ENCODE measurements at regions of chr3 and their contacts with region 1.

Region 1: GRCh38 chr3:179082416-179082815 is 10.8 kb upstream of the ZMAT3 start:
- DNase-seq: no peak
- H3K4me3 ChIP-seq: no peak overlapping the region
- H3K27ac ChIP-seq: no peak overlapping the region
- H3K4me1 ChIP-seq: no peaks in the 10 kb centered on the region
- H3K27me3 ChIP-seq: peaks cover 0 to 5% of the 10 kb centered on the region in 2 experiments
- CTCF ChIP-seq: no peak
- POLR2A ChIP-seq: no peak

Region 2: GRCh38 chr3:179098388-179099077 is 16.1 kb after region 1 on chr3:
- CTCF ChIA-PET with region 1: interaction called, 10 read pairs
- POLR2A ChIA-PET with region 1: no interaction called
- dilution Hi-C with region 1: no loop called
- intact Hi-C with region 1: no loop called
- DNase-seq: no peak
- H3K4me3 ChIP-seq: no peak overlapping the region
- H3K27ac ChIP-seq: no peak overlapping the region
- H3K4me1 ChIP-seq: no peaks in the 10 kb centered on the region
- H3K27me3 ChIP-seq: peaks cover 2% of the 10 kb centered on the region in 2 experiments
- CTCF ChIP-seq: no peak
- POLR2A ChIP-seq: no peak

Region 3: DNA sequence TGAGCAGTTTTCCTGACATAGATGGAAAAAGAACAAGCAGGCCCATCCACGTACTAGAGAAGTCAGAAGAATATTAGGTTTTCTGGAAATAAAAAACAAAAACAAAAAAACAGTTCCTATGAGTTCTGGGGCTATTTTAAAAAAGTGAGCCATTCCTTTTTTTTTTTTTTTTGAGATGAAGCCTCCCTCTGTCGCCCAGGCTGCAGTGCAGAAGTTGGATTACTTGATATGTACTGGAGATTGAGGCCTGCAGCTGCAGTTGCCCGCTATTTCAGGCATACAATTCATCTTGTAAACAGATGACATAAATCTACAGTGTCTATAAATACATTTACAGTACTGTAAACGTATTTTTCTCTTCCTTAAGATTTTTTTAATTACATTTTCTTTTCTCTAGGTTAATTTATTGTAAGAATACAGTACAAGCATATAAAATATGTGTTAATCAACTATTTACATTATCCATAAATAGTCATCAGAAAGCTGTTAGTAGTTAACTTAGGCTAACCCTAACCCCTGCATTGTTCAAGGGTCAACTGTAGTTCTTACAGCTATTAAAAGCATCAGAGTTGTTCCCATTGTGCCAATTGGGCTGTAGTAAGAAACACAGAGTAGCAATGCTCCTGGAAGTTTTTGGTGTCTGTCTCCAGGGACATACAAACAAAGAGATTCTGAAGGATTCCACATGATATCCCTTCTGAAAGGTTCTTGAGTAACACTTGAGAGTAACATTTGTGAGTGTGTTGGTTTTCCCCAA is 469.1 kb after region 1 on chr3:
- CTCF ChIA-PET with region 1: no interaction called
- POLR2A ChIA-PET with region 1: no interaction called
- dilution Hi-C with region 1: no loop called
- intact Hi-C with region 1: no loop called
- DNase-seq: peak; percentile 30
- H3K4me3 ChIP-seq: no peak overlapping the region
- H3K27ac ChIP-seq: no peak overlapping the region
- H3K4me1 ChIP-seq: no peaks in the 10 kb centered on the region
- H3K27me3 ChIP-seq: no peaks in the 10 kb centered on the region
- CTCF ChIP-seq: no peak
- POLR2A ChIP-seq: no peak